ENCODE measurements at regions of chr5 and their contacts with region 1.

Region 1: GRCh38 chr5:171874234-171874633 is 88.6 kb downstream of the SMIM23 start:
- DNase-seq: no peak
- H3K4me3 ChIP-seq: no peak overlapping the region
- H3K27ac ChIP-seq: no peak overlapping the region
- H3K4me1 ChIP-seq: no peaks in the 10 kb centered on the region
- H3K27me3 ChIP-seq: no peaks in the 10 kb centered on the region
- CTCF ChIP-seq: no peak
- POLR2A ChIP-seq: no peak

Region 2: DNA sequence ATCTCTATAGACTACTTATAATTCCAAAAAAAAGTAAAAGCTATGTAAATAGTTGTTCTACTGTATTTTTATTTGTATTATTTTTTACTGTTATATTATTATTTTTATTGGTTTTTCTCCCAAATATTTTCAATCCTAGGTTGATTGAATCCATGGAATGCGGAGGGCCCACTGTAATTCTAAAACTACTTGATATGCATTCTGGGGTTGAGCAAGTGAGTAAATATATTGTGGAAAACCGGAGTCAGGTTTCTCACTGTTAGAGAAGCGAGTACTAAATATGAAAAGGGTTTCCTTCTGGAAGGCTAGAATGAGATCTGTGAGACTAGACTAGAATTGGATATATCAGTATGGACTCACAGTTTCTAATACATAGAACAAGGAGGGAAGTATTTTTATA is 65.7 kb after region 1 on chr5:
- intact Hi-C with region 1: loop called (anchors 2 kb)
- DNase-seq: no peak
- H3K4me3 ChIP-seq: no peak overlapping the region
- H3K27ac ChIP-seq: no peak overlapping the region
- H3K4me1 ChIP-seq: peaks cover 14% of the 10 kb centered on the region
- H3K27me3 ChIP-seq: no peaks in the 10 kb centered on the region
- CTCF ChIP-seq: no peak
- POLR2A ChIP-seq: no peak